ENCODE measurements at regions of chr15 and their contacts with region 1.

Region 1: GRCh38 chr15:65028921-65029735 is at the start of gene MTFMT:
- DNase-seq: peak; percentile 83 to 90 (median 85)
- H3K4me3 ChIP-seq: peak within 1 kb of the TSS; percentile 71 to 84
- H3K4me3 Mint-ChIP-seq: peak within 1 kb of the TSS; percentile 87 to 95 (median 94)
- H3K27ac ChIP-seq: peak within 1 kb of the TSS; percentile 70
- H3K27ac Mint-ChIP-seq: peak within 1 kb of the TSS; percentile 43 to 97 (median 84)
- H3K4me1 ChIP-seq: peaks cover 17% of the 10 kb centered on the region
- H3K4me1 Mint-ChIP-seq: peaks cover 11 to 24% (median 20%) of the 10 kb centered on the region in 4 donors
- H3K27me3 ChIP-seq: no peaks in the 10 kb centered on the region
- H3K27me3 Mint-ChIP-seq: peaks cover 3 to 16% of the 10 kb centered on the region in 2 donors
- total RNA-seq, gene MTFMT: 15.2 to 18.3 TPM

Region 2: GRCh38 chr15:64875641-64876223 is 153.4 kb before region 1 on chr15:
- CTCF ChIA-PET with region 1: no interaction called
- POLR2A ChIA-PET with region 1: no interaction called
- intact Hi-C with region 1: no loop called
- DNase-seq: no peak
- H3K4me3 ChIP-seq: no peak overlapping the region
- H3K4me3 Mint-ChIP-seq: no peak overlapping the region
- H3K27ac ChIP-seq: no peak overlapping the region
- H3K27ac Mint-ChIP-seq: peak overlapping the region in 1 of 7 donors; percentile 19
- H3K4me1 ChIP-seq: peaks cover 24% of the 10 kb centered on the region
- H3K4me1 Mint-ChIP-seq: peaks cover 12 to 37% (median 25%) of the 10 kb centered on the region in 4 donors
- H3K27me3 ChIP-seq: no peaks in the 10 kb centered on the region
- H3K27me3 Mint-ChIP-seq: no peaks in the 10 kb centered on the region

Region 3: DNA sequence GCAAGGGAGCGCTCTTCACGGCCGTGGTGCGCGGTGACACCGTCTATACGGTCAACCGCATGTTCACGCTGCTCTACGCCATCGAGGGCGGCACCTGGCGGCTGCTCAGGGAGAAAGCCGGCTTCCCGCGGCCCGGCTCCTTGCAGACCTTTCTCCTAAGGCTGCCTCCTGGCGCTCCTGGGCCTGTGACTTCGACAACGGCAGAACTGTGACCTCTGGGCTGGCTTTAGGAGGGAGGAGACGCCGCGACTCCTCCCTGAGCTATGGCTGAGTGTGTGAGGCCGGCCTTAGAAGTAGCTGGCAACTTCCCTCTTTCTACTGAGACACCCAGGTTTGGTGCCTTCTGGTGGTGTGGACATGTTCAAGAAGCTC is 48.8 kb after region 1 on chr15:
- CTCF ChIA-PET with region 1: interaction called, 24 read pairs
- POLR2A ChIA-PET with region 1: no interaction called
- intact Hi-C with region 1: loop called (anchors 1 kb)
- DNase-seq: peak in 4 of 5 donors; percentile 24 to 45 (median 38)
- H3K4me3 ChIP-seq: no peak overlapping the region
- H3K4me3 Mint-ChIP-seq: peak overlapping the region in 3 of 8 donors; percentile 36 to 66 (median 53)
- H3K27ac ChIP-seq: no peak overlapping the region
- H3K27ac Mint-ChIP-seq: peak overlapping the region in 2 of 7 donors; percentile 23 to 48
- H3K4me1 ChIP-seq: peaks cover 10% of the 10 kb centered on the region
- H3K4me1 Mint-ChIP-seq: peaks cover 13 to 21% (median 16%) of the 10 kb centered on the region in 4 donors
- H3K27me3 ChIP-seq: no peaks in the 10 kb centered on the region
- H3K27me3 Mint-ChIP-seq: peaks cover 23 to 37% of the 10 kb centered on the region in 2 donors

Region 4: GRCh38 chr15:65133548-65134200 is 104.5 kb after region 1 on chr15 and contains the start of gene PDCD7:
- CTCF ChIA-PET with region 1: no interaction called
- POLR2A ChIA-PET with region 1: no interaction called
- intact Hi-C with region 1: loop called (anchors 1 kb)
- DNase-seq: peak; percentile 82 to 89 (median 87)
- H3K4me3 ChIP-seq: peak within 1 kb of the TSS; percentile 70 to 91
- H3K4me3 Mint-ChIP-seq: peak within 1 kb of the TSS; percentile 89 to 96 (median 93)
- H3K27ac ChIP-seq: peak within 1 kb of the TSS; percentile 82
- H3K27ac Mint-ChIP-seq: peak within 1 kb of the TSS; percentile 91 to 99 (median 96)
- H3K4me1 ChIP-seq: peaks cover 26% of the 10 kb centered on the region
- H3K4me1 Mint-ChIP-seq: peaks cover 20 to 42% (median 31%) of the 10 kb centered on the region in 4 donors
- H3K27me3 ChIP-seq: no peaks in the 10 kb centered on the region
- H3K27me3 Mint-ChIP-seq: no peaks in the 10 kb centered on the region
- total RNA-seq, gene PDCD7: 30.5 to 40.5 TPM

Measured in CD4-positive, alpha-beta memory T cell (primary cell).